Activated T-helper 1 cell treated with anti-CD3 and anti-CD28 coated beads, Interleukin-12 subunit alpha, Interleukin-12 subunit beta, Interleukin-2, Interleukin-4 antibody, amounts not matched to agents 30 ng/mL and 10 ng/mL and 1 ng/mL, durations not matched to agents 14 hours and 24 hours and 36 hours (primary cell): ENCODE measurements at regions of chr18 and their contacts with region 1.

Region 1: GRCh38 chr18:51197661-51198424 is at the start of gene MEX3C:
- DNase-seq: peak; percentile 99
- H3K4me3 Mint-ChIP-seq: peak within 1 kb of the TSS; percentile 96
- H3K27ac Mint-ChIP-seq: peak within 1 kb of the TSS; percentile 99
- H3K4me1 Mint-ChIP-seq: peaks cover 28% of the 10 kb centered on the region
- H3K27me3 Mint-ChIP-seq: no peaks in the 10 kb centered on the region
- total RNA-seq, gene MEX3C: 67.6 and 68.0 TPM in 2 replicates

Region 2: DNA sequence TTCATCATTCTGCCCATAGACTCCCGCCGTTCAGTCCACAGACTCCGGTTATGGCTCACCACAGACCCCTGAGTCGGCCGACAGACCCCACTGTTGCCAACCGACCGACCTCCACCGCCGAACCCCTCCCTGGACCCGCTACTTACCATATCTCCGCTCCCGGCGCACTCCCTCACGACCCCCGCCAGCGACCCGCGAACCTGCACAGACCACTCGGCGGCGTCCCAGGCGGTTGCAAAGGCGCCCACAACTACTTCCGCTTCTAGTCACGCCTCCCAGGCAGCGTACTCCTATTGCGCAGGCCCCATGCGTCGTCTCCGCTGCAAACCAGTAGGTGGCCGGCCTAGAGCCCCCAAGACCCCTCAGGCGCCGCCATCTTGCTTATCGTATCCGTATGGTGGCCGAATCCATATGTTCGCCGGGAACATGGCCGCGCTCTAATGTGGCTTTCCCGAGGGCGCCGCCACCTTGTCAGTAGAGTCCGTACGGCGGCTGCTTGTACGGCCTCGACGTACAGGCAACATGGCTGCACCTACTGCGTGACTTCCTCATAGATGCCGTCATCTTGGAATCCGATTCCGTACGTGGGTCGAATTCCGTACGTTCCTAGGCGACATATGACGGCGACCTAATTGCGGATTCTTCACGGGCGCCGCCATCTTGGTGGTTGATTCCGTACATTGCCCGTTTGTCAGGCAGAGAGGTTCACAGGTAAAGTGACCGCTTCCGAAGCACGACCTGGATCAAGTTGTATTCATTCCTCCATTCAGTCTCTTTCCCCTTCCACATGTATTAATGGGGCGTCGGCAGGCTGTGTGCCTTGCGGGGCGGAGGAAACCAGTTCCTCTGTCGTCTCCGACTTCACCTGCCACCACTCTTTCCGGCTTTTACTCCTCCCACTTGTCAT is 910.1 kb before region 1 on chr18 and contains the start of gene CXXC1:
- intact Hi-C with region 1: loop called (anchors 5 kb)
- DNase-seq: peak; percentile 95
- H3K4me3 Mint-ChIP-seq: peak within 1 kb of the TSS; percentile 93
- H3K27ac Mint-ChIP-seq: peak within 1 kb of the TSS; percentile 97
- H3K4me1 Mint-ChIP-seq: peaks cover 31% of the 10 kb centered on the region
- H3K27me3 Mint-ChIP-seq: no peaks in the 10 kb centered on the region
- total RNA-seq, gene CXXC1: 114 and 117 TPM in 2 replicates

Region 3: GRCh38 chr18:50878345-50879301 is 319.2 kb before region 1 on chr18 and contains the start of gene ME2:
- intact Hi-C with region 1: loop called (anchors 1 kb)
- DNase-seq: peak; percentile 87
- H3K4me3 Mint-ChIP-seq: peak within 1 kb of the TSS; percentile 99
- H3K27ac Mint-ChIP-seq: peak within 1 kb of the TSS; percentile 99
- H3K4me1 Mint-ChIP-seq: peaks cover 16% of the 10 kb centered on the region
- H3K27me3 Mint-ChIP-seq: no peaks in the 10 kb centered on the region
- total RNA-seq, gene ME2: 122 and 129 TPM in 2 replicates

Region 4: DNA sequence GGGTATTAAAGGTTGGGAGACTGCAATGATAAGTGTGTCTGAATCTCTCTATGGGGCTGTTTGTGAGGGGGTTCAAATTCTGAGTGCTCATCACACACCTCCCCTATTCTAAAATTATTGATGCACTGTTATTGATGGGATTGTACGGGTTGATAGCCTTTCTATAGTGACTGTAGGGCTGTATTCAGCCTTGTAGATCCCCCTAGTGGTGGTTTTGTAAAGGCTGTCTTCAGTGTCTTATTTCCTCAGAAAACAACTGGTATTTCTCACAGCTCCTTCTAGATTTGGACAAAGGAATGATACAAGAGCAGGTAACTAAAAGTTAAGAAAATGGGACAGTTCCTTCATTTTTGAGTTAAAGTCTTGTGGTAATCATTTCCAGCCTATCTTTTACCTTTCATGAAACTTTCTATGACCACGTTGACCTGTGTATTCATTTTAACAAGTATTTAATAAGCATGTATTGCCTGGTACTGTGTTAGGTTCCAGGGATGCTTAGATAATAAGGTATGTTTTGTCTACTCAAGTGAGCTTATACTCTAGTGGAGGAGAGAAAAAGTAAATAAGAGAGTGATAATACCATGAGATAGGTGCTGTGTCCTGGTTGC is 146.6 kb before region 1 on chr18:
- intact Hi-C with region 1: loop called (anchors 5 kb)
- DNase-seq: no peak
- H3K4me3 Mint-ChIP-seq: no peak overlapping the region
- H3K27ac Mint-ChIP-seq: peak overlapping the region; percentile 16
- H3K4me1 Mint-ChIP-seq: peaks cover 39% of the 10 kb centered on the region
- H3K27me3 Mint-ChIP-seq: no peaks in the 10 kb centered on the region

Region 5: DNA sequence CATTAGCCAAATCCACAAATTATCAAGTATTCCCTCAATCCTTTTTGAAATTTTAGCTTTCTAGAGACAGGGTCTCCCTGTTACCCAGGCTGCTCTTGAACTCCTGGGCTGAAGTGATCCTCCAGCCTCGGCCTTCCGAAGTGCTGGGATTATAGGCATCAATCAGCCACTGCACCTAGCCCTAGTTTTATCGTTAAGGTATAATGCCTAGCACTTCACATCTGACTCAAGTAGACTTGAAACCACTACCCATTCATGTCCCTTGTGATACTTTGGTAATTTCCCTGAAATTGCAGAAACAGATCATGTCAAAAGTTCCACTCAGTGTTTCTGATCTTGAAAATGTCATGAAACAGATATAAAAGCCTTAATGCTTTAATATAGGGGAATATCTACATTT is 26.6 kb before region 1 on chr18:
- intact Hi-C with region 1: loop called (anchors 1 kb)
- DNase-seq: no peak
- H3K4me3 Mint-ChIP-seq: peak overlapping the region; percentile 58
- H3K27ac Mint-ChIP-seq: peak overlapping the region; percentile 98
- H3K4me1 Mint-ChIP-seq: peaks cover 62% of the 10 kb centered on the region
- H3K27me3 Mint-ChIP-seq: no peaks in the 10 kb centered on the region

Region 6: DNA sequence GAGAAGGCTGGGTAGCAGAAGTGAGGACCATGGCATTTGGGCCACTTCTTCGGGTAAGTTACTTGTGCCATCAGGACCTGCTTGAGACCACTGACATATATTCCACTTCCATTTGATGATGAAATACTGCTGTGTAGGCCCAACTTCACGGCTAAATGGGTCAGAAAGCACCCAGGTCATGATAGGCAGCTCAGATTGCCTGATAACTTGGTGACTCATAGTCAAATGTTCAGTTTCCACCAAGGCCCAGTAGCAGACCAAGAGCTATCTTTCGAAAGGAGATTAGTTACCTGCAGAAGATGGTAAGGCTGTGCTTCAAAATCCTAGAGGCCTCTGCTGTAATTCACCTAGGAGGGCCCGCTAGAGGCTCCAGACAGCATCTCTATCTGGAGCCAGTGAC is 31.5 kb after region 1 on chr18:
- intact Hi-C with region 1: no loop called
- DNase-seq: no peak
- H3K4me3 Mint-ChIP-seq: no peak overlapping the region
- H3K27ac Mint-ChIP-seq: no peak overlapping the region
- H3K4me1 Mint-ChIP-seq: peaks cover 2% of the 10 kb centered on the region
- H3K27me3 Mint-ChIP-seq: no peaks in the 10 kb centered on the region

Region 7: GRCh38 chr18:51342820-51343219 is 145.0 kb after region 1 on chr18:
- intact Hi-C with region 1: loop called (anchors 5 kb)
- DNase-seq: no peak
- H3K4me3 Mint-ChIP-seq: no peak overlapping the region
- H3K27ac Mint-ChIP-seq: no peak overlapping the region
- H3K4me1 Mint-ChIP-seq: no peaks in the 10 kb centered on the region
- H3K27me3 Mint-ChIP-seq: peaks cover 9% of the 10 kb centered on the region